Tibial artery (tissue), 4 donors: ENCODE measurements at regions of chr19 and their contacts with region 1.

Region 1: GRCh38 chr19:51615949-51616348 is 14.3 kb downstream of the SIGLEC5 start:
- DNase-seq: no peak
- H3K4me3 ChIP-seq: no peak overlapping the region
- H3K27ac ChIP-seq: no peak overlapping the region
- H3K4me1 ChIP-seq: no peaks in the 10 kb centered on the region
- H3K27me3 ChIP-seq: peaks cover 0 to 32% of the 10 kb centered on the region in 2 donors
- CTCF ChIP-seq: no peak

Region 2: GRCh38 chr19:51531349-51532315 is 84.3 kb before region 1 on chr19 and contains the start of gene SIGLEC6:
- intact Hi-C with region 1: loop called (anchors 1 kb)
- DNase-seq: peak; percentile 63 to 77
- H3K4me3 ChIP-seq: no peak within 1 kb of the TSS
- H3K27ac ChIP-seq: no peak within 1 kb of the TSS
- H3K4me1 ChIP-seq: no peaks in the 10 kb centered on the region
- H3K27me3 ChIP-seq: peaks cover 0 to 2% of the 10 kb centered on the region in 2 donors
- CTCF ChIP-seq: no peak

Region 3: GRCh38 chr19:51644636-51645271 is 28.8 kb after region 1 on chr19:
- intact Hi-C with region 1: no loop called
- DNase-seq: no peak
- H3K4me3 ChIP-seq: peak overlapping the region; percentile 0 to 14
- H3K27ac ChIP-seq: no peak overlapping the region
- H3K4me1 ChIP-seq: no peaks in the 10 kb centered on the region
- H3K27me3 ChIP-seq: peaks cover 0 to 16% of the 10 kb centered on the region in 2 donors
- CTCF ChIP-seq: no peak